Activated CD4-positive, alpha-beta memory T cell treated with anti-CD3 and anti-CD28 coated beads, Interleukin-2, amount 10 ng/mL, durations not matched to agents 7 days and 5 days (primary cell): ENCODE measurements at regions of chr1 and their contacts with region 1.

Region 1: GRCh38 chr1:234730770-234731568 is 121.0 kb upstream of the IRF2BP2 start:
- DNase-seq: peak; percentile 59
- H3K4me3 Mint-ChIP-seq: peak overlapping the region; percentile 38
- H3K27ac Mint-ChIP-seq: peak overlapping the region; percentile 92
- H3K4me1 Mint-ChIP-seq: peaks cover 68% of the 10 kb centered on the region
- H3K27me3 Mint-ChIP-seq: no peaks in the 10 kb centered on the region

Region 2: DNA sequence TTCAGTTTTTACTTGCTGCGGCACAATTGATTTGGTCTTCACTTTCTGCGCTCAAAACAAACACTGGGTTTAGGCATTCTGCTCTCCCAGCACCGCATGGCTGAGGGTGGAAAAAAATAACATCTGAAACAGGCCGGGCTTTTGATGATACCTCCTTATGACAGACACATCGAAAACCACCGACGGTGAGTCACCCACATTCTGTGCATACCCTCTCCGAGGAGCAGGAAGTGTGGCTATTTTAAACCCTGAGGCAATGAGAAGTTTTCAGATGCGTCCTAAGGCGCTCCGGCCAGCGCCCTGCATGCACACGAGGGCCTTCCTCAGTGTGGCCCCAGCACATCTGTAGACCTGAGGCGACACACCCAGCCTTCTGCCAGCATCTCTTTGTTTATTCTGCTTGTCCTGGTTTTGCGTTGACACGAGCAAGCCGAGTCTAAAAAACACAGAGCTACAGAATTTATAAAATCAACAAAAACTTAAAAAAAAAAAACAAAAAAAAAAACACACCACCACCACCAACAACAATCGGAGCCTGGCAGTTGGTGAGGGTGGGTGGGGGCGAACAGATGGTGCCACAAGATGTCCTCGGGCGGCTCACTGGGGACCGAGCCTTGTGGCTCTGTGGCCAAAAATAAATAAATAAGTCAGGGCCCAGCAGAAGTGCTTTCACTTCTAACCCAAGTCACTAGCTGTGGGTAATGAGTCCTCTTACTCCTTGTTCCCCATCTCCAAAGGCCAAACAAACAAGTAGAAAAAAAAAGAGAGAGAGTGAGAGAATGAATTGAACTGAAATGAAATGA is 41.6 kb after region 1 on chr1:
- CTCF ChIA-PET with region 1: interaction called, 4 read pairs
- POLR2A ChIA-PET with region 1: interaction called, 23 read pairs
- DNase-seq: peak; percentile 91
- H3K4me3 Mint-ChIP-seq: peak overlapping the region; percentile 31
- H3K27ac Mint-ChIP-seq: peak overlapping the region; percentile 95
- H3K4me1 Mint-ChIP-seq: peaks cover 55% of the 10 kb centered on the region
- H3K27me3 Mint-ChIP-seq: no peaks in the 10 kb centered on the region